ENCODE measurements at regions of chr9 and their contacts with region 1.

Region 1: GRCh38 chr9:100028201-100028784 is 70.5 kb downstream of the ERP44 start:
- DNase-seq: peak; percentile 11 to 74 (median 52)
- ATAC-seq: peak; percentile 81 to 85 (median 82)
- H3K4me3 ChIP-seq: no peak overlapping the region
- H3K4me3 Mint-ChIP-seq: no peak overlapping the region
- H3K27ac ChIP-seq: no peak overlapping the region
- H3K27ac Mint-ChIP-seq: no peak overlapping the region
- H3K4me1 ChIP-seq: no peaks in the 10 kb centered on the region
- H3K4me1 Mint-ChIP-seq: peaks cover 3 to 15% (median 6%) of the 10 kb centered on the region in 3 donors
- H3K27me3 ChIP-seq: no peaks in the 10 kb centered on the region
- H3K27me3 Mint-ChIP-seq: no peaks in the 10 kb centered on the region

Region 2: GRCh38 chr9:99921875-99922710 is 106.2 kb before region 1 on chr9:
- CTCF ChIA-PET with region 1: no interaction called
- POLR2A ChIA-PET with region 1: no interaction called
- DNase-seq: no peak
- ATAC-seq: peak in 1 of 4 experiments; percentile 30
- H3K4me3 ChIP-seq: no peak overlapping the region
- H3K4me3 Mint-ChIP-seq: no peak overlapping the region
- H3K27ac ChIP-seq: no peak overlapping the region
- H3K27ac Mint-ChIP-seq: peak overlapping the region; percentile 13 to 40
- H3K4me1 ChIP-seq: peaks cover 2 to 5% of the 10 kb centered on the region in 2 experiments
- H3K4me1 Mint-ChIP-seq: peaks cover 55 to 58% (median 56%) of the 10 kb centered on the region in 3 donors
- H3K27me3 ChIP-seq: no peaks in the 10 kb centered on the region
- H3K27me3 Mint-ChIP-seq: no peaks in the 10 kb centered on the region

Region 3: GRCh38 chr9:100322954-100323536 is 294.8 kb after region 1 on chr9:
- CTCF ChIA-PET with region 1: interaction called in 1 of 2 experiments, 13 read pairs
- POLR2A ChIA-PET with region 1: no interaction called
- DNase-seq: peak in 19 of 35 experiments; percentile 1 to 47 (median 8)
- ATAC-seq: no peak
- H3K4me3 ChIP-seq: no peak overlapping the region
- H3K4me3 Mint-ChIP-seq: no peak overlapping the region
- H3K27ac ChIP-seq: no peak overlapping the region
- H3K27ac Mint-ChIP-seq: no peak overlapping the region
- H3K4me1 ChIP-seq: no peaks in the 10 kb centered on the region
- H3K4me1 Mint-ChIP-seq: peaks cover 10 to 17% (median 13%) of the 10 kb centered on the region in 3 donors
- H3K27me3 ChIP-seq: no peaks in the 10 kb centered on the region
- H3K27me3 Mint-ChIP-seq: no peaks in the 10 kb centered on the region

Measured in T-cell (primary cell).